Mammary epithelial cell (primary cell): ENCODE measurements at regions of chr2 and their contacts with region 1.

Region 1: DNA sequence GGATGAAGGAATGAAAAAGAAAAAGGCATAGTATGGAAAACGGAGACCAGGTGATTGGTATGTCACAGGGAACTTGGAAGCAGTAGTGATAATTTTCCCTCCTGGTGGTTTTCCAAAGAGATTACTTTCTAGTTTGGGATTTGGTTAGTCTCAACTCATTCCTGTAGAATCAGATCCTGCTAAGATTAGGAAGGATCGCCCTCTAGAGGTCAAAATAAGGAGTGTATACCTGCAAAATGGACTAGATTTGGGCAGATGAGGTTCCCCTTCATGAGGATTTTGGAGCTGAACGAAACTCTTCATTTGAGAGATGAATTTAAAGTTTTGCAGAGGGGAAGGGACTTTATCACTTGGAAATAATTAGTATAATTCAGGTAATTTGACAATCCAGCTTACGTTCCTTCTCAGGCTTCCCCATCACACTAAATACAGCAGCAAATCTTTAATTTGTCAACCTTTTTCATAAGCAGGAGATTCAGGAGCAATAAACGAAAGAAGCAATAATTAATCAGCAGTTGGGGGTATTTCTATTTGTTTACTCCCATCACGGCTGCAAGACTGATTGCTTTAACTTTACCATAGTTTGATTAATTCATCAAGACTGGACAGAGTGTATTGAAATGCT is 65.2 kb downstream of the CCDC195 start:
- DNase-seq: peak; percentile 31
- H3K4me3 ChIP-seq: no peak overlapping the region
- H3K27ac ChIP-seq: no peak overlapping the region
- H3K4me1 ChIP-seq: no peaks in the 10 kb centered on the region
- H3K27me3 ChIP-seq: no peaks in the 10 kb centered on the region
- CTCF ChIP-seq: peak; percentile 66 to 81

Region 2: DNA sequence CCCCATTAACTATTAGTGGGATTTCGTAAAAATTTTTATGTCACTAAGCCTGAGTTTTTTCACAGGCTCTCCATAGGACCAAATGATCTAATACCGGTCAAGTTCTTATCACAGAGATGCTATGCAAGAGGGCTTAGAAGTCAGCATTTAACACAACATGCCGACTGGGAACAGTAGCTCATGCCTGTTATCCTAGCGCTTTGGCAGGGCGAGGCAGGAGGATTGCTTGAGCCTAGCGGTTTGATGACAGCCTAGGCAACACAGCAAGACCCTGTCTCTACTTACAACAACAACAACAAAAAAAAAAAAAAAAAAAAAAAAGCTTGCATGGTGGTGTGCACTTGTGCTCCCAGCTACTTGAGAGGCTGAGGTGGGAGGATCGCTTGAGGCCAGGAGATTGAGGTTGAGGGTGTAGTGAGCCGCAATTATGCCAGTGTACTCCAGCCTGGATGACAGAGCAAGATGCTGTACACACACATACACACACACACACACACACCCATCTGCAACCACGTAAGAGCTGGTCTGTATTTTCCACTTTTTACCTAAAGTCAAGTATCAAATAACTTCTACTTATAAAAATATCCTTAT is 181.5 kb before region 1 on chr2:
- CTCF ChIA-PET with region 1: no interaction called
- dilution Hi-C with region 1: no loop called
- in situ Hi-C with region 1: no loop called
- intact Hi-C with region 1: loop called (anchors 10 kb)
- DNase-seq: no peak
- H3K4me3 ChIP-seq: no peak overlapping the region
- H3K27ac ChIP-seq: no peak overlapping the region
- H3K4me1 ChIP-seq: no peaks in the 10 kb centered on the region
- H3K27me3 ChIP-seq: no peaks in the 10 kb centered on the region
- CTCF ChIP-seq: no peak

Region 3: GRCh38 chr2:224630659-224631550 is 20.0 kb before region 1 on chr2:
- CTCF ChIA-PET with region 1: no interaction called
- dilution Hi-C with region 1: no loop called
- in situ Hi-C with region 1: no loop called
- intact Hi-C with region 1: no loop called
- DNase-seq: peak; percentile 34
- H3K4me3 ChIP-seq: no peak overlapping the region
- H3K27ac ChIP-seq: no peak overlapping the region
- H3K4me1 ChIP-seq: no peaks in the 10 kb centered on the region
- H3K27me3 ChIP-seq: peaks cover 3% of the 10 kb centered on the region
- CTCF ChIP-seq: no peak

Region 4: GRCh38 chr2:224749136-224749535 is 98.2 kb after region 1 on chr2:
- CTCF ChIA-PET with region 1: no interaction called
- dilution Hi-C with region 1: no loop called
- in situ Hi-C with region 1: no loop called
- intact Hi-C with region 1: no loop called
- DNase-seq: no peak
- H3K4me3 ChIP-seq: no peak overlapping the region
- H3K27ac ChIP-seq: no peak overlapping the region
- H3K4me1 ChIP-seq: peaks cover under 1% of the 10 kb centered on the region
- H3K27me3 ChIP-seq: no peaks in the 10 kb centered on the region
- CTCF ChIP-seq: peak; percentile 7 to 41

Region 5: DNA sequence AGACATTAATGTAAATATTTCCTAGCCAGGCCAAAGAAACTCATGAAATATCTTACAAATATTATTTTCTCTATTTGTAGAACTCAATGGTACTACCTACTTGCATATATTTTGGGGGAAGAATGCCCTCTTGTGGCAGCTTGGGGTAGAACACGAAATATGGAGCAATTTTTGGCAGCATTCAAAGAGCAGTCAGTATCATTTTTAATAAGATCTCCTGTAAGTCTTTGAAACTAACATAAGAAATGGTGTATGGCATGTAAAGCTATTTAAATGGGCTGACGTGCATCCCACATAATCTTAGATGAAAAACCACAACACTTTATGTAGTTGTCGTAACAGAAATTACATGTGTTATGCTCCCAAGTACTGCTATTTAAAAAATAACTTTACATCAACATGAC is 127.5 kb after region 1 on chr2:
- CTCF ChIA-PET with region 1: no interaction called
- dilution Hi-C with region 1: no loop called
- in situ Hi-C with region 1: no loop called
- intact Hi-C with region 1: loop called (anchors 10 kb)
- DNase-seq: peak; percentile 53
- H3K4me3 ChIP-seq: no peak overlapping the region
- H3K27ac ChIP-seq: no peak overlapping the region
- H3K4me1 ChIP-seq: no peaks in the 10 kb centered on the region
- H3K27me3 ChIP-seq: no peaks in the 10 kb centered on the region
- CTCF ChIP-seq: peak; percentile 76 to 81